Mammary epithelial cell (primary cell): ENCODE measurements at regions of chr1 and their contacts with region 1.

Region 1: GRCh38 chr1:180814859-180815587 is 97.7 kb upstream of the KIAA1614 start:
- DNase-seq: no peak
- H3K4me3 ChIP-seq: no peak overlapping the region
- H3K27ac ChIP-seq: no peak overlapping the region
- H3K4me1 ChIP-seq: no peaks in the 10 kb centered on the region
- H3K27me3 ChIP-seq: no peaks in the 10 kb centered on the region
- CTCF ChIP-seq: no peak

Region 2: GRCh38 chr1:180837020-180837419 is 22.0 kb after region 1 on chr1:
- CTCF ChIA-PET with region 1: no interaction called
- dilution Hi-C with region 1: no loop called
- in situ Hi-C with region 1: no loop called
- intact Hi-C with region 1: no loop called
- DNase-seq: no peak
- H3K4me3 ChIP-seq: no peak overlapping the region
- H3K27ac ChIP-seq: no peak overlapping the region
- H3K4me1 ChIP-seq: no peaks in the 10 kb centered on the region
- H3K27me3 ChIP-seq: no peaks in the 10 kb centered on the region
- CTCF ChIP-seq: no peak

Region 3: DNA sequence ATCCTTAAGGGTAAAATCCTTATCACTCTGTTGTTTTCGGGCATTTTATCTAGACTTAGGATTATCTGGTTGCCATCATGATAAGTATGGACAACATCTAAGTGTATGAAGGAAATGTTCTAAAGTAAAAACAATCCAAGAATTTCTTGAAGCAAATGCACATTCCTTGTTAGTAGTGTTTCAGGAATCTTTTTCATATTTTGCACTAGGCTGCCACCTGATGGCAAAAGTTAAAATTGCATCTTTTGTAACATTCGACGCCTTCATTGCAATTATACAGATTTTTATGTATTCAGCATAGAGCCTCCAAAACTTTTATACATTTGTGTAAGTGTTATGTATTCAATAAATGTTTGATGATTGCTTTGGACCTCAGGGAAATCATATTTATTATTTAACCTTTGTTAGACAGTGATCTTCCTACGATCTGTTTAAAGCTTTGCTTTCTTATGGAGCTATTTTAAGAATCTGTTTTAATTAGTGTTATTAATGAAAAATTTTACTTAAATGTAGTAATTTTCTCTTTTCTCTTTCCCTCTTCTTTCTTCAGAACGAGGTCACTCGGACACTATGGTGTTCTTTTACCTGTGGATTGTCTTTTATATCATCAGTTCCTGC is 48.2 kb after region 1 on chr1:
- CTCF ChIA-PET with region 1: no interaction called
- dilution Hi-C with region 1: loop called (anchors 5 kb)
- in situ Hi-C with region 1: no loop called
- intact Hi-C with region 1: no loop called
- DNase-seq: peak; percentile 32
- H3K4me3 ChIP-seq: no peak overlapping the region
- H3K27ac ChIP-seq: no peak overlapping the region
- H3K4me1 ChIP-seq: peaks cover 9% of the 10 kb centered on the region
- H3K27me3 ChIP-seq: no peaks in the 10 kb centered on the region
- CTCF ChIP-seq: peak; percentile 51 to 62